Left colon (tissue), 2 donors: ENCODE measurements at regions of chr3 and their contacts with region 1.

Region 1: DNA sequence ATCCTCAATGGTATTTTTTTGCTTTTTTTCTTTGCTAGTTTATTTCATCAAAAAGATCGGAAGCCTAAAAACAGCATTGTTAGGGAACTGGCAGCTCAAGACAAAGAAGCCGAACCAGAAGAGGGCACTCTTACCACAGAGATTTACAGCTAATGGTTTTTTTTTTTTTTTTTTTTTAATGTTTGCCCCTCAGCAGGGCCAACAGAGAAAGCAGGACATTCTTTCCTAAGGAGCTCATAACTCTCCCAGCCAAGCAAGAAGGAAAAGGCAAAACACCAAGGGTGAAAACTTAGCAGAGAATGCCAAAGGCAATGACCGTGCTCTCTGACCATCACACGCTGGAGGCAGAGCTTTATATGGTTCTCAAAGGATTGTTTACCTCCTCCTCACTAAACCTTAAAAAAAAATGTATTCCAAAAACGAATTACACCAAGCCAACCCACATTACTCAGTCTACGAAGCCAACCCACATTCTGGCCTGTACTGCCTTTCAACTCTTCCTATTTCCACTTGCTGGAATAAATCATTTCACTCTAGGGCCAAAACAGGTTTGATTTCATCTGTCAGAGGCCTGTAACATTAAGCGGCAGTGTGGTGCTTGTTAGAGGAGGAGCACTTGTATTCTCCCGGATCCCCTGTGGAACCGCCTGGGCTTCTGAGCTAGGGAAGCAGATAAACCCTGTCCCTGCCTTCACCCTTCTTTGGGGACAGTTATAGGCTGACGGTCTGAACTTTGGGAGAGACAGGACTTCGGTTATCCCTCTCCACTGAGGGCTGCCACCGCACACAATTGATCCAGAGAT is 35.6 kb upstream of the GYG1 start:
- DNase-seq: peak; percentile 15 to 44
- ATAC-seq: peak; percentile 53

Region 2: DNA sequence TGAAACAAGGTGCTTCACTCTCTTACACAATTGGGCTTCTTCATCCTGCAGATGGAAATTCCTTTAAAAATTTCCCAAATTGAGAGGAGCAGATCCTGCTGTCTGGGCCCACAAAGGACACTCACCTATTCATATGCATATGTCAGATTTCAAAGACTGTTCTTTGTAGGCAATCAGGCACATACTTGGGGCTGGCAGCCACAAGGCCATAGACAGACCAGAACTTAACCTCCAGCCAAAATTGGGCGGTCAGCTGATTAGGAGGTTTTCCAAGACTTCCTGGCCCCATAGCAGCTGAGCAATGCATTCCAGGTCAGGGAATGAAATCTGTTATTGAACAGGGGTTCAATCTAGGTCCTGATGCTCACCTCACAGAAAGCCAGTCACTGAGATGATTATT is 158.7 kb after region 1 on chr3:
- intact Hi-C with region 1: loop called in 1 of 2 experiments (anchors 10 kb)
- DNase-seq: no peak
- ATAC-seq: no peak

Region 3: DNA sequence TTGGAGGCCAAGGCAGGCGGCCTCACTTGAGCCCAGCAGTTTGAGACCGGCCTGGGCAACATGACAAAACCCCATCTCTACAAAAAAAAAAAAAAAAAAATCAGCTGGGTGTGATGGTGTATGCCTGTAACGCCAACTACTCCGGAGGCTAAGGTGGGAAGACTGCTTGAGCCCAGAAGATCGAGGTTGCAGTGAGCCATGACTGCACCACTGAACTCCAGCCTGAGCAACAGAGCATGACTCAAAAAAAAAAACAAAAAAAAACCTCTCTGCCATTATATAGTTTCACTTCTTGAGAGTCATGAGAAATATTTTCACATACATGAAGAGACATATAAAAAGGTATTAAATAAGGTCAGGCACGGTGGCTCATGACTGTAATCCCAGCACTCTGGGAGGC is 311.8 kb after region 1 on chr3:
- intact Hi-C with region 1: loop called (anchors 5 to 10 kb)
- DNase-seq: no peak
- ATAC-seq: no peak

Region 4: GRCh38 chr3:150462108-150462507 is 1506.4 kb after region 1 on chr3:
- intact Hi-C with region 1: no loop called
- DNase-seq: no peak
- ATAC-seq: peak; percentile 19